GM10248 (cell line): ENCODE measurements at regions of chr4 and their contacts with region 1.

Region 1: GRCh38 chr4:143186649-143187048 is 1.9 kb downstream of the USP38 start:
- DNase-seq: no peak
- CTCF ChIP-seq: no peak

Region 2: DNA sequence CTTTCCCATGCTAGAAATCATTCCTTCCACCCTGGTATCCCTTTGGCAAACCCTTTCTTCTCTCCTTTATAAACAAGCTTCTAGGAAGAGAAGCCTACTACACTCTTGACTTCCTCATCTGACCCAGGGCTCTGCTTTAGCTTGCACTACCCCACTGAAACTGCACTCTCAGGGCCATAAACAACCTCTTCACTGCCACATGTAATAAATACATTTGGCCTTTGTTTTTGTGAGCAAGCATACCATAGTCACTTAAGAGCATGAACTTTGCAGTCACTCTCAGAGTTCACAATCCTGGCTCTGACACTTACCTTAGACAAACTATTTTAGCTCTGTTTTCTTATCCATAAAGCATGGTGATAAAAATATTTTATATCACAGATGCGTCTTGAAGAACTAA is 52.7 kb before region 1 on chr4:
- CTCF ChIA-PET with region 1: no interaction called
- POLR2A ChIA-PET with region 1: no interaction called
- DNase-seq: no peak
- CTCF ChIP-seq: no peak

Region 3: GRCh38 chr4:143148521-143148920 is 38.1 kb before region 1 on chr4:
- CTCF ChIA-PET with region 1: no interaction called
- POLR2A ChIA-PET with region 1: no interaction called
- DNase-seq: no peak
- CTCF ChIP-seq: no peak

Region 4: GRCh38 chr4:143202824-143203223 is 16.2 kb after region 1 on chr4:
- CTCF ChIA-PET with region 1: interaction called, 21 read pairs
- POLR2A ChIA-PET with region 1: no interaction called
- DNase-seq: no peak
- CTCF ChIP-seq: peak; percentile 29

Region 5: DNA sequence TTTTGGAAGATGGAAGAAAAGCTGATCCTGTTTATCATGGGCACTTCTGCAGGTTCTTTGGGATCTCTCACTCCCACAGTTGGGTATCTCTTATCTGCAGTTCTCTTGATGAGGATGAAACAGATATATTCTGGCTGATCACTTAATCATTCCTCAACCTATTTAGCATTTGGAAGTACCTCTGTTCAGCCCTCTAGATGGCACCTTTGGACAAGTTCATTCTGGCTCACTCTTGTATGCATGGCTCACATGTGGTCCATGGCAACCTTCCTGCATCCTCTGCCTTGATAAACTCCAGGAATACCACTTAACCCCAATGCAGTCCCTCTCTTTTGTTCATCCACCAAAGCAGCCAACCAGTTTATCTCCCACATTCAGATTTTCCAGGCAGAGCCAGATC is 401.1 kb after region 1 on chr4:
- CTCF ChIA-PET with region 1: no interaction called
- POLR2A ChIA-PET with region 1: no interaction called
- DNase-seq: no peak
- CTCF ChIP-seq: peak; percentile 8